ENCODE measurements at regions of chr12 and their contacts with region 1.

Region 1: DNA sequence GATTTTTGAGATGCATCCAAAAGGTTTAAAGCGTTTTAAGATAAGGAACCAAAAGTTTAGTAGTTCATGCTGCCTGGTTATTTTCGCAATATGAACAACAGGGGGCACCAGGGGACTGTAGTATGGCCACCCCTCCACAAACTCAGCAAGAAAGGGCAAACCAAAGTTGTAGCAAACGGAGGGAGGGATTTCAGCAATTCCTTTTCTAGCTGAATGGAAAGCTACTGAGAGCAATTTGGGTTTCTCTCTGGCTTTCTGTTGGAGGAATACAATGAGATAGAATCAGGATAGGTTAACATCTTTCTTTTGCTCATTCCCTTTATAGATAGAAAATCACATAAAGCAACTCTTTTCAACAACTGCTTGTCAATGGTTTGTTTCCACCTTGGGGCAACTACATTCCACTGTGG is 62.5 kb downstream of the DRAM1 start:
- DNase-seq: peak in 1 of 2 donors; percentile 30
- H3K4me3 ChIP-seq: no peak overlapping the region
- H3K27ac ChIP-seq: peak overlapping the region; percentile 35 to 90
- H3K4me1 ChIP-seq: no peaks in the 10 kb centered on the region
- H3K27me3 ChIP-seq: no peaks in the 10 kb centered on the region
- CTCF ChIP-seq: peak in 2 of 3 donors; percentile 66 to 79
- POLR2A ChIP-seq: no peak

Region 2: DNA sequence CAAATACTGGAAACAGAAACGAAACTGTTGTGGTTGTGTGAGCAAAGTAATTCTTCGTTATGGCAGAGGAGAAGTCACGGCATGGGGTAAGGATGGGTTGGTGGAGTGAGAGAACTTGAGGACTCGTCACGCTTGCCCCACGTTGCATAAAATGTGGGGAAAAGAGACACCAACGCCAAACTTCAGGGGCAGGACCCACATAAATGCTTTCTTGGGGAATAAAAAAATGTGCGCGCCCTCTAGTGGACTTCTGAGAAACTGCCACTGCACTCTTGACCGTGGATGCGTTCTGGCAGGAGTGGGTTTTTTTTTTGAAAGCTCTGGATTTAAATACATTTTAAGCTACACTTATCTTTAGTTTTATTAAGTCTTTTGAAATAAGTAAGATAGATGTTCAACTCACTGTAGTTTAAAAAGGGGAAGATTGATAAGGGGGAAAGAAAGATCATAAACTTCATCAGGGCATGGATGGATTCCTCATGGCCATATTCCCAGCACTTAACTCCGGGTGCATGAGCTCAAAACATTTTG is 544.6 kb after region 1 on chr12:
- intact Hi-C with region 1: loop called (anchors 10 kb)
- DNase-seq: peak in 1 of 2 donors; percentile 38
- H3K4me3 ChIP-seq: peak overlapping the region; percentile 16 to 46 (median 32)
- H3K27ac ChIP-seq: peak overlapping the region; percentile 58 to 74
- H3K4me1 ChIP-seq: peaks cover 0 to 2% of the 10 kb centered on the region in 2 donors
- H3K27me3 ChIP-seq: no peaks in the 10 kb centered on the region
- CTCF ChIP-seq: peak; percentile 55 to 85 (median 66)
- POLR2A ChIP-seq: no peak

Region 3: GRCh38 chr12:102776041-102776440 is 836.2 kb after region 1 on chr12:
- intact Hi-C with region 1: loop called (anchors 10 kb)
- DNase-seq: no peak
- H3K4me3 ChIP-seq: no peak overlapping the region
- H3K27ac ChIP-seq: no peak overlapping the region
- H3K4me1 ChIP-seq: no peaks in the 10 kb centered on the region
- H3K27me3 ChIP-seq: no peaks in the 10 kb centered on the region
- CTCF ChIP-seq: no peak
- POLR2A ChIP-seq: no peak